A549 (cell line): ENCODE measurements at regions of chrX and their contacts with region 1.

Region 1: GRCh38 chrX:69387567-69388487 is 116.3 kb upstream of the NALF2 start:
- DNase-seq: peak; percentile 43 to 46
- ATAC-seq: peak; percentile 83 to 97
- H3K4me3 ChIP-seq: no peak overlapping the region
- H3K27ac ChIP-seq: no peak overlapping the region
- H3K4me1 ChIP-seq: no peaks in the 10 kb centered on the region
- CTCF ChIP-seq: peak; percentile 63
- EP300 ChIP-seq: no peak
- POLR2A ChIP-seq: no peak
- RAD21 ChIP-seq: peak; percentile 78 to 79

Region 2: DNA sequence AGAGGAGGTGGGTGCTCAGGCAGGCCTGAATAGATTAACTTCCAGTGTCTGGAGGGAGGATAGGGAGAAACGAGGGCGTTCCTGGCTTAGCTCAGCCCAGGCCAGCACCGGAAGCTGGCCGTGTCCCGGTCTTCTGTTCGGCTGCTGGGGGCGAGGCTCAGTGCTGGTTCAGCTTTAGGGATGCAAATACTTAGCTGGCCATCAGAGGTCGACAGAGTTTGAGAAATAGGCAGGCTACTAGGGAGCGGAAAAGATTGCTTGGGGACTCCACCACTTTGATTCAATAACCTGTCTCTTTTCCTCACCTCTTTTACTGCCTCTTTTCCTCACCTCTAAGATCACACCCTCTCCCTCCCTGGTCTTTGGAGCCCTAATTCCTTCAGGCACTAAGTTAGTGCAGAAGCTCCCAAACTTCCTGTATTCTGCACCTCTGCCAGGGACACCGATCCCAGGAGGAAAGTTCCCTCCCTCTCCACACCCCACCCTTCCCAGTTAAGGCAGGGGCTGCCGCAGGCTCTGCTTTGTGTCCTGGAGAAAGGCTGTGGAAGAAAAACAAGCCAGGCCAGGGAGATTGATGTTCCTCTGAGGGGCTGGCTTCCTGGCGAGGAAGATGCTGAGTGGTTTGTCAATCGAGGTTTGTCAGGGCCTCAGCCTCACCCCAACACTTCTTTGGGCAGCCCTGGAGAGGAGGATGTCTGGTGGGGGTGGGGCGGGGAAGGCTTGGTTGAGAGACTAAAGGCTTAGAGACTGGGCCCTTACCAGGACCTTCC is 565.0 kb before region 1 on chrX:
- CTCF ChIA-PET with region 1: interaction called, 23 read pairs
- POLR2A ChIA-PET with region 1: no interaction called
- DNase-seq: peak; percentile 36 to 50
- ATAC-seq: peak; percentile 80 to 93
- H3K4me3 ChIP-seq: no peak overlapping the region
- H3K27ac ChIP-seq: no peak overlapping the region
- H3K4me1 ChIP-seq: no peaks in the 10 kb centered on the region
- CTCF ChIP-seq: peak; percentile 61
- EP300 ChIP-seq: no peak
- POLR2A ChIP-seq: no peak
- RAD21 ChIP-seq: peak; percentile 75 to 79

Region 3: GRCh38 chrX:69179380-69179911 is 208.4 kb before region 1 on chrX:
- CTCF ChIA-PET with region 1: no interaction called
- POLR2A ChIA-PET with region 1: no interaction called
- DNase-seq: no peak
- ATAC-seq: no peak
- H3K4me3 ChIP-seq: no peak overlapping the region
- H3K27ac ChIP-seq: no peak overlapping the region
- H3K4me1 ChIP-seq: no peaks in the 10 kb centered on the region
- CTCF ChIP-seq: no peak
- EP300 ChIP-seq: no peak
- POLR2A ChIP-seq: no peak
- RAD21 ChIP-seq: no peak

Region 4: GRCh38 chrX:69362856-69363255 is 25.0 kb before region 1 on chrX:
- CTCF ChIA-PET with region 1: interaction called, 14 read pairs
- POLR2A ChIA-PET with region 1: no interaction called
- DNase-seq: no peak
- ATAC-seq: no peak
- H3K4me3 ChIP-seq: no peak overlapping the region
- H3K27ac ChIP-seq: no peak overlapping the region
- H3K4me1 ChIP-seq: no peaks in the 10 kb centered on the region
- CTCF ChIP-seq: no peak
- EP300 ChIP-seq: no peak
- POLR2A ChIP-seq: no peak
- RAD21 ChIP-seq: no peak

Region 5: DNA sequence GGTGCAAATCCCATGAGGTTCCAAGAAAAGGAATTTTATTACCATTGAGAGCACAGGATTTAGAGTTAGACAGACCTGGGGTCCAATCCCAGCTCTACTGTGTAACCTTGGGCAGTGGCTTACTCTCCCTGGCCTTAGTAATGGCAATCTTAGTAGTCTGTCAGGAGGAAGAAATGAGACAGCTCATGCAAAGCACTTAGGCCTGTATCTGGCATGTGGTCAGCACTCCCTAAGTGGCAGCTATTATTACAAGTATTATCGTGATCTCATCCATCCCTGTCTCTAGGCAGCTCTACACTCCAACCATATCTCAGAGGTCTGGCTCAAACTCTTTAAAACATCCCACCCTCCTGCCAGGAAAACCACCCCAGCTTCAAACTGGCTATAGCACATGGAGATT is 13.3 kb before region 1 on chrX:
- CTCF ChIA-PET with region 1: interaction called, 22 read pairs
- POLR2A ChIA-PET with region 1: no interaction called
- DNase-seq: no peak
- ATAC-seq: no peak
- H3K4me3 ChIP-seq: no peak overlapping the region
- H3K27ac ChIP-seq: no peak overlapping the region
- H3K4me1 ChIP-seq: no peaks in the 10 kb centered on the region
- CTCF ChIP-seq: no peak
- EP300 ChIP-seq: no peak
- POLR2A ChIP-seq: no peak
- RAD21 ChIP-seq: no peak

Region 6: GRCh38 chrX:69538321-69538876 is 150.6 kb after region 1 on chrX:
- CTCF ChIA-PET with region 1: no interaction called
- POLR2A ChIA-PET with region 1: no interaction called
- DNase-seq: peak; percentile 61 to 70
- ATAC-seq: peak; percentile 99 to 100
- H3K4me3 ChIP-seq: peak overlapping the region; percentile 55
- H3K27ac ChIP-seq: peak overlapping the region; percentile 74 to 87
- H3K4me1 ChIP-seq: no peaks in the 10 kb centered on the region
- CTCF ChIP-seq: peak; percentile 68
- EP300 ChIP-seq: no peak
- POLR2A ChIP-seq: no peak
- RAD21 ChIP-seq: peak; percentile 75 to 83